ENCODE measurements at regions of chr14 and their contacts with region 1.

Region 1: GRCh38 chr14:103104654-103105452 is 10.3 kb downstream of the EXOC3L4 start:
- DNase-seq: peak; percentile 77 to 86
- H3K4me3 ChIP-seq: peak overlapping the region; percentile 42
- H3K4me3 Mint-ChIP-seq: peak overlapping the region; percentile 50
- H3K27ac Mint-ChIP-seq: no peak overlapping the region
- H3K4me1 ChIP-seq: peaks cover 37% of the 10 kb centered on the region
- H3K4me1 Mint-ChIP-seq: peaks cover 10% of the 10 kb centered on the region
- H3K27me3 ChIP-seq: no peaks in the 10 kb centered on the region
- H3K27me3 Mint-ChIP-seq: no peaks in the 10 kb centered on the region
- CTCF ChIP-seq: peak; percentile 95 to 98

Region 2: DNA sequence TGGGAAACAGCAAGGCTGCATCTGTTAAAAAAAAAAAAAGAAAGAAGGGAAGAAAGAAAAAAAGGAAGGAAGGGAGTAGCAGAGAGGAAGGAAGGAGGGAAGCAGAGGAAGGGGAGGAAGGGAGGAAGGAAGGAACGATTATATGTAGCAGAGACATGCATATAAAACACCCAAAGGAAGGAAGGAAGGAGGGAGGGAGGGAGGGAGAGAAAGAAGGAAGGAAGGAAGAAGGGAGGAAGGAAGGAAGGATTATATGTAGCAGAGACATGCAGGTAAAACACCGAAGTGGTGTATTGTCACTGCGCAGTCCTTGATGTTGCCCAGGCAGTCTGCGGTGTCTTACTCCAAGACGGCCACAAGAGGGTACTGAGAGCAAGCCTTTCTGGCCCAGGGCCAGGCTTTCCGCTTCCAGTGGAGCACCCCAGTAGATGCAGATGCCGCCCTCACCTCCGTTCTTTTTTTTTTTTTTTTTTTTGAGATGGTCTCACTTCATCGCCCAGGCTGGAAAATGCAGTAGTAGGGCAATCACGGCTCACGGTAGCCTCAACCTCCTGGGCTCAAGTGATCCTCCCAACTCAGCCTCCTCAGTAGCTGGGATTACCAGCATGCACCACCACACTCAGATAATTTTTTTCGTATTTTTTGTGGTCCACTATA is 26.6 kb before region 1 on chr14:
- CTCF ChIA-PET with region 1: interaction called, 8 read pairs
- POLR2A ChIA-PET with region 1: no interaction called
- intact Hi-C with region 1: loop called (anchors 1 kb)
- DNase-seq: peak; percentile 80 to 81
- H3K4me3 ChIP-seq: no peak overlapping the region
- H3K4me3 Mint-ChIP-seq: no peak overlapping the region
- H3K27ac Mint-ChIP-seq: no peak overlapping the region
- H3K4me1 ChIP-seq: no peaks in the 10 kb centered on the region
- H3K4me1 Mint-ChIP-seq: no peaks in the 10 kb centered on the region
- H3K27me3 ChIP-seq: no peaks in the 10 kb centered on the region
- H3K27me3 Mint-ChIP-seq: no peaks in the 10 kb centered on the region
- CTCF ChIP-seq: peak; percentile 80 to 84

Region 3: DNA sequence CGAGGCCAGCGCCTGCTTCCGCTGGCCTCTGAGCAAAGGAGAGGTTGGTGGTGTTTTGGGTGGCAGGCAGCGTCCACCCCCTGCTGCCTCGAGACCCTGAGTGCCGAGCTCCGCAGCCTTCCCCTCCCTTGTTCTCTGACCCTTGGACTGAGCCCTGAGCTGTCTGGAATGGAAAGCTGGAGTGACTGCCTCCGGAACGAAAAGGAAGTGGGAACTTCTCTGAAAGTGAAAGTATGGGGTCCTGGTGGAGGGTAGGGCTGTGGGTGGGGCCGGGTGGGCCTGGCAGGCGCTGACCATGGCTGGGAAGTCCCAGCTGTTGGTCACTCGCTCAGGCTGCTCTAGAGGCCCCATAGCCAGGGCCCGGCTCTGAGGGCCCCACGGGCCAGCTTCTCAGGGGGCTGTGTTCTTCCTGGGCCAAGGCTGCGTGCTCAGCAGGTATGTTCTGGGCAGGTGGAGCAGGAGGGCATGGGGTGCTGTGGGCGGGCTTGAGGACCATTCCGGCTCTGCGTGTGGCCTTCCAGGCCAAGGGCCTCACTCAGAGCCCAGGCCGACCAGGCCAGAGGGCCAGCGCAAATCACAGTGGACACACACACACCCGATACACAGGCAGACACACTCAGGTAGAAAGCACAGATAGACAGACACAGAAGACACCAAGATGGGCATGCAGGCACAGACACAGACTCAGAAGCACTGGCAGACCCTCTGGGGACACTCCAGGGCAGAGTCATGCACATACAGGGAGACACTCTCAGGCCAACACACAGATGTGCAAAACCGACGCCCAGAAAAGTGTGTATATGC is 10.2 kb before region 1 on chr14 and contains the start of gene EXOC3L4:
- CTCF ChIA-PET with region 1: interaction called, 23 read pairs
- POLR2A ChIA-PET with region 1: interaction called, 5 read pairs
- intact Hi-C with region 1: no loop called
- DNase-seq: peak; percentile 40 to 68
- H3K4me3 ChIP-seq: peak within 1 kb of the TSS; percentile 27
- H3K4me3 Mint-ChIP-seq: peak within 1 kb of the TSS; percentile 62
- H3K27ac Mint-ChIP-seq: peak within 1 kb of the TSS; percentile 80
- H3K4me1 ChIP-seq: peaks cover 36% of the 10 kb centered on the region
- H3K4me1 Mint-ChIP-seq: peaks cover 18% of the 10 kb centered on the region
- H3K27me3 ChIP-seq: no peaks in the 10 kb centered on the region
- H3K27me3 Mint-ChIP-seq: no peaks in the 10 kb centered on the region
- CTCF ChIP-seq: no peak
- total RNA-seq, gene EXOC3L4: 6.3 and 6.7 TPM in 2 replicates

Region 4: DNA sequence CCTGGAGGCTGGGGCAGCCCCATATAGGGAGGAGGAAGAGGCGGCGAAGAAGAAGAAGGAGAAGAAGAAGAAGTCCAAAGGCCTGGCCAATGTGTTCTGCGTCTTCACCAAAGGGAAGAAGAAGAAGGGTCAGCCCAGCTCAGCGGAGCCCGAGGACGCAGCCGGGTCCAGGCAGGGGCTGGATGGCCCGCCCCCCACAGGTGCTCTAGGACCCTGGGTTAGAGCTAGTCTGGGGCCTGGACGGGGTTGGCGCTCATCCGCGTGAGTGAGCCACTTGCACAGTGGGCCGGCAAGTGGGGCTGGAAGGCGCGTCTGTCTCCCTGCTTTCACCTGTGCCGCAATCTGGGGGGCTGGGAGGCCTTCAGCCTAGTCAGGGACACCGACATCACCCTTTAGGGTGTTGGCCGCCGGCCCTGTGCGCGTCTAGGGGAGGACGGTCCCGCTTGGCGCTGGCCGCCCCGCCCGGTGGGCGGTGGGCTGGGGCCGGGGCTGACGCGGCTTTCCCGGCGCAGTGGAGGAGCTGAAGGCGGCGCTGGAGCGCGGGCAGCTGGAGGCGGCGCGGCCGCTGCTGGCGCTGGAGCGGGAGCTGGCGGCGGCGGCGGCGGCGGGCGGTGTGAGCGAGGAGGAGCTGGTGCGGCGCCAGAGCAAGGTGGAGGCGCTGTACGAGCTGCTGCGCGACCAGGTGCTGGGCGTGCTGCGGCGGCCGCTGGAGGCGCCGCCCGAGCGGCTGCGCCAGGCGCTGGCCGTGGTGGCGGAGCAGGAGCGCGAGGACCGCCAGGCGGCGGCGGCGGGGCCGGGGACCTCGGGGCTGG is 21.8 kb after region 1 on chr14:
- CTCF ChIA-PET with region 1: interaction called, 26 read pairs
- POLR2A ChIA-PET with region 1: no interaction called
- intact Hi-C with region 1: no loop called
- DNase-seq: peak; percentile 78 to 90
- H3K4me3 ChIP-seq: peak overlapping the region; percentile 38
- H3K4me3 Mint-ChIP-seq: peak overlapping the region; percentile 63
- H3K27ac Mint-ChIP-seq: peak overlapping the region; percentile 20
- H3K4me1 ChIP-seq: peaks cover 7% of the 10 kb centered on the region
- H3K4me1 Mint-ChIP-seq: peaks cover 6% of the 10 kb centered on the region
- H3K27me3 ChIP-seq: no peaks in the 10 kb centered on the region
- H3K27me3 Mint-ChIP-seq: no peaks in the 10 kb centered on the region
- CTCF ChIP-seq: peak in 1 of 2 experiments; percentile 12

Region 5: DNA sequence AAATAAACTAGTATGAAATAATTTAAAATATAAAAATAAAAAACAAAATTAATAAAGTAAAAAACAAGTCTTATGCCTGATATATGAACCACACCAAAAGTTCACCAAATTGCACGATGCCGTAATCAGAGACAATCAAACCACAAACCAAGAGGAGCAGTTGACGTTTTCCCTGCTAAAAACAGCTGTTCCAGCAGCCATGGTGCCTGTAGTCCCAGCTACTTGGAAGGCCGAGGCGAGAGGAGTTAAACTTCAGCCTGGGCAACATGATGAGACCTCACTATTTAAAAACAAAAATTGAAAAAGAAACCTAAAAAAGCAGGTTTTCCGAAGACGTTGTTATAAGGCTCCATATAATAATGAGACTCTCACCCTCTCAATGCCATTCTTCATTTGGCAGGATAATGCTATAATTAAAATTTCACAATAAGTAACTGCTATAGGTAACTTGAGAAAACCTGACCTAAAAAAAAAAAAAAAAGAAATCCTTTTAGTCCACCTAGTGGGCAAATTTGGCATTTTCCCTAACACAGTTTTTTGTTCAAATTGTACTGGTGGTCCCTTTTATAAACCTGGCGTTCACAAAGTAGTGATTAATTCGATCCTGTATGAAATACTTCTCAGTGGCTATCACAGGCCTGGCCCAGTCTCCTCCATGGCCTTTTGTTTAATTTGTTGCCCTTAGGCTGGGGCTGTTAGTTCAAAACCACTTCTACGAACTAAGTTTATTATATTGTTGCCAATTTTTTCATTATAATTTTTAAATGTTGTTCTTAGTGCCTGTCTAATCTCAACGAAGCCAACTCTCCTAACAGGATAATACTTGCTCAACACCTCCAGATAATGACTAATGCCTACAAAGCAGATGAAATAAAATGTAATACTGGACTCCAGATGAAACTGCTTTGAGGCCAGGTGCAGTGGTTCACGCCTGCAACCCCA is 80.5 kb after region 1 on chr14:
- CTCF ChIA-PET with region 1: interaction called, 33 read pairs
- POLR2A ChIA-PET with region 1: no interaction called
- intact Hi-C with region 1: loop called (anchors 2 kb)
- DNase-seq: peak in 1 of 2 experiments; percentile 45
- H3K4me3 ChIP-seq: no peak overlapping the region
- H3K4me3 Mint-ChIP-seq: peak overlapping the region; percentile 70
- H3K27ac Mint-ChIP-seq: peak overlapping the region; percentile 100
- H3K4me1 ChIP-seq: peaks cover 34% of the 10 kb centered on the region
- H3K4me1 Mint-ChIP-seq: peaks cover 22% of the 10 kb centered on the region
- H3K27me3 ChIP-seq: no peaks in the 10 kb centered on the region
- H3K27me3 Mint-ChIP-seq: no peaks in the 10 kb centered on the region
- CTCF ChIP-seq: peak; percentile 58 to 74

Region 6: DNA sequence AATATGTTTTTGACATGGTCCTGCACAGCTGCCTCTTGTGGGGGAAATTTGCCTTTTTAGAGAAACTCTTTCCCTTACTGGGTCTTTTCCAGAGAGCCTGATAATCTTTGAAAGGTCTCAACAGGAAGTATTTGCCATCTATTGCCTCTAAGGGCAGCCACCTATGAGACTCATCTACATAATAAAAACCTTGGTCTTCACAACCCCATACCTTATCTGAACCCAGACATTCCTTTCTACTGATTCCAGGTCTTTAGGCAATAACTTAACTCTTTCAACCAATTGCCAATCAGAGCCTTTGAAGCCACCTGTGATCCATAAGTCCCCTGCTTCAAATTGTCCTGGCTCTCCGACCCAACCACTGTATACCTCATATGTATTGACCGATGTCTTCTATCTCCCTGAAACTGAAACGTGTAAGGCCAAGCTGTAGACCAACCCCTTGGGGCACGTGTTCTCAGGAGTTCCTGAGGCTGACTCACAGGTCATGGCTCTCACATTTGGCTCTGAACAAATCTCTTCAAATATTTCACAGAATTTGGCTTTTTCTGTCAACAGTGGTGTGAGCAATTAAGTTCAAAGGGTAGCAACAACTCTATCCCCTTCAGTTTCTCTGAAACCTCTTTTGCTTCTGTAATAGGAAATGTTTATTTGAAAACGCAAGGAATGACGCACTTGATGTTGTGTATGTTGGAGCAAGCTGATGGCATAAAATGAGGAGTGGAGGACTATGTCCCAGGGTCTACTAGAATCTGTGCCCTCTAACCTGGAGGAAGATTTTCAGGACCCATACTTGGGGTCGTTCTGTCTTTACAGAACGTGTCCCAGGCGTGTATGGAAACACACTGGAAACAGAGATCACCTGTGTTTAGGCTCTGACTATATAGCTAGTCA is 180.0 kb after region 1 on chr14:
- CTCF ChIA-PET with region 1: interaction called, 35 read pairs
- POLR2A ChIA-PET with region 1: no interaction called
- intact Hi-C with region 1: loop called (anchors 2 kb)
- DNase-seq: peak; percentile 49 to 51
- H3K4me3 ChIP-seq: no peak overlapping the region
- H3K4me3 Mint-ChIP-seq: peak overlapping the region; percentile 3
- H3K27ac Mint-ChIP-seq: peak overlapping the region; percentile 46
- H3K4me1 ChIP-seq: peaks cover 16% of the 10 kb centered on the region
- H3K4me1 Mint-ChIP-seq: peaks cover 15% of the 10 kb centered on the region
- H3K27me3 ChIP-seq: no peaks in the 10 kb centered on the region
- H3K27me3 Mint-ChIP-seq: no peaks in the 10 kb centered on the region
- CTCF ChIP-seq: no peak

Region 7: GRCh38 chr14:103292426-103293374 is 187.8 kb after region 1 on chr14:
- CTCF ChIA-PET with region 1: interaction called, 35 read pairs
- POLR2A ChIA-PET with region 1: no interaction called
- intact Hi-C with region 1: loop called (anchors 1 kb)
- DNase-seq: peak; percentile 66 to 83
- H3K4me3 ChIP-seq: no peak overlapping the region
- H3K4me3 Mint-ChIP-seq: no peak overlapping the region
- H3K27ac Mint-ChIP-seq: no peak overlapping the region
- H3K4me1 ChIP-seq: no peaks in the 10 kb centered on the region
- H3K4me1 Mint-ChIP-seq: no peaks in the 10 kb centered on the region
- H3K27me3 ChIP-seq: no peaks in the 10 kb centered on the region
- H3K27me3 Mint-ChIP-seq: no peaks in the 10 kb centered on the region
- CTCF ChIP-seq: peak; percentile 78 to 92